Prostate gland (tissue), 2 donors: ENCODE measurements at regions of chr1 and their contacts with region 1.

Region 1: DNA sequence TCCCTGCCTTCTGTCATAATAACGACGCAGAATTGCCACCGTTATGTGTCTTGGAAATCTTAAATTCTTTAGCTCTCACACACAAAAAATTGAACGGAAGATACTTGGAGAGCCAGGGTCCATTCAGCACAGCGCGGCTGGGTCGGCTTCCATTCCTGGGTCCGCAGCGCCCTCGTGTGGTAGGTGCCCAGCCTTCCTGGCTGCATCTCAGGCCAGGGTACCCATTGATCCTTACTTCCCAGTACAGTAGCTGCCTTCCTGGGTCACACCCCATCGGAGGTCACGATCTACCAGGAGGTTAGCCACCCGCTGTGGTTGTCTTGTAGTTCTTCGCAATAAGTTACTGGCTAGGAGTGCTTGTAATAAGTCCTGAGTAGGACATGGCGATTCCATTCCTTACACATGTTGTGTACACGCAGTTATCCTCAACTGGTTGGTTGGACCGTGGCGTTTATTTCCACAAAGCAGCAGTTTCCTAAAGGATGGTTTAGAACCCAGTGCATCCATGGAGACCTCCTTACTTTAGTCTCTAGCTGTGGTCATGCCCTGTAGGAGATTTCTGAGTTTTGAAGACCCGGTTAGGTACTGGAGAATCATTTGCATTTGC is 9.9 kb upstream of the MTARC1 start:
- DNase-seq: peak; percentile 74
- H3K4me3 ChIP-seq: no peak overlapping the region
- H3K27ac ChIP-seq: no peak overlapping the region
- H3K4me1 ChIP-seq: no peaks in the 10 kb centered on the region
- H3K27me3 ChIP-seq: no peaks in the 10 kb centered on the region
- CTCF ChIP-seq: peak; percentile 58 to 87 (median 84)
- POLR2A ChIP-seq: no peak

Region 2: GRCh38 chr1:220272047-220272840 is 504.6 kb before region 1 on chr1 and contains the start of gene RAB3GAP2:
- intact Hi-C with region 1: loop called (anchors 10 kb)
- DNase-seq: peak; percentile 91
- H3K4me3 ChIP-seq: peak within 1 kb of the TSS; percentile 74 to 90
- H3K27ac ChIP-seq: peak within 1 kb of the TSS; percentile 68 to 89
- H3K4me1 ChIP-seq: peaks cover 6% of the 10 kb centered on the region
- H3K27me3 ChIP-seq: no peaks in the 10 kb centered on the region
- CTCF ChIP-seq: peak in 2 of 4 experiments; percentile 13 to 17
- POLR2A ChIP-seq: peak; percentile 54
- total RNA-seq, gene RAB3GAP2: 17.6 to 20.7 TPM

Region 3: DNA sequence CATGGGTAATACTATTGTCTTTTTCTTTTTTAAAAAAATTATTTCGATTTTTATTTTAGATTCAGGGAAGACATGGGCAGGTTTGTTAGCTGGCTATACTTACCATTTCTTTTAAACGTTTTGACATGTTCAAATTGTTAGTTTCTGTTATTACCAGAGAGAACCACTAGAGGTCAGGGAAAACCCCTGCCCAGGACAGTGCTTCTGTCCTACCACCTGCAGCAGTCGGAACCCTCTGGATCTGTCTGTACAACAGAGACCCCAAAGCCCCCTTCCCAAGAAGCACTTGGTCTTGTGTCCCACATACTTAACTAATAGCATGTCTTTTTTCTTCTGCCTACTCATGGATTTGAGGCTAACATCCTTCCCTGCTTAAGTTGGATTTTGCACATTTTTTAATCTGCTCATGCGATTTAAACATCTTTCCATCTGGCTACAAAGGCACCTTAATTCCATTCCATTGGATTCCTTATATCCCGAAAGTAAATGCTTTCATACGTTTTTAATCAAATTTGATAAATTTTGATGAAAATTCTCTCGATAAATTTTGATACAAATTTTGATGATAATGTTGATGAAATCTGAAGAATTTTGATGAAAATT is 96.6 kb before region 1 on chr1:
- intact Hi-C with region 1: loop called (anchors 1 kb)
- DNase-seq: peak; percentile 34
- H3K4me3 ChIP-seq: no peak overlapping the region
- H3K27ac ChIP-seq: no peak overlapping the region
- H3K4me1 ChIP-seq: no peaks in the 10 kb centered on the region
- H3K27me3 ChIP-seq: no peaks in the 10 kb centered on the region
- CTCF ChIP-seq: peak; percentile 49 to 70 (median 60)
- POLR2A ChIP-seq: no peak

Region 4: DNA sequence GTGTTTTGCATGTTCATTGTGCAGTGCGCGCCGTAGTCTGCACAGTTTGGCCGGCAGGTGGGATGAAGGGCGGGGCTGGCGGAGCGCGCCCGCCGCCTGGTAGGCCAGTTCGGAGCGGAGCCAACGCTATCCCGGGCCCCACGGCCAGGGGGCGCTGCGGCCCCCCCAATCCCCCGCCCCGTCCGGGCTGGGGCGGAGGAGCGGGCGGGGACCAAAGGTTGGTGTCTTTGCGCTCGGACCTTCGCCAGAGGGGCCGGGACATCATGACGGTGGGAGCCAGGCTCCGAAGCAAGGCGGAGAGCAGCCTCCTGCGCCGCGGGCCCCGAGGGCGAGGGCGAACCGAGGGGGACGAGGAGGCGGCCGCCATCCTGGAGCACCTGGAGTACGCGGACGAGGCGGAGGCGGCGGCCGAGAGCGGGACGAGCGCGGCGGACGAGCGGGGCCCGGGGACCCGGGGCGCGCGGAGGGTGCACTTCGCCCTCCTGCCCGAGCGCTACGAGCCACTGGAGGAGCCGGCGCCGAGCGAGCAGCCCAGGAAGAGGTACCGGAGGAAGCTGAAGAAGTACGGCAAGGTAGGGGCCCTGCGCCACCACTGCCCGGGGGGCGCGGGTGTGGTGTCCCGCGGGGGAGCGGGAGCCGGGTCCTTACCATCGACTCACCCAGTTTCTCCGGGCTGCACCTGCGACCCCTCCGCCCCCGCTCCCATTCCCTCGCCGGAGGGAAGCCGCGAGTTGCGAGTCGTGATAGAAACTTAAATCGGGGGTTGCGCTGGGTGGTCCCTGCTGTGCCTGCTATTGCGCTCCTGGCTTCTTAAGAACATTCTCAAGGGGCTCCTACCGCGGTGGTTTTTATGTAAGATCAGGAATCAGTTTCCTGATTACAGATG is 86.4 kb before region 1 on chr1 and contains the start of gene C1orf115:
- intact Hi-C with region 1: loop called (anchors 5 kb)
- DNase-seq: peak; percentile 75
- H3K4me3 ChIP-seq: peak within 1 kb of the TSS; percentile 77 to 90
- H3K27ac ChIP-seq: peak within 1 kb of the TSS; percentile 75 to 78
- H3K4me1 ChIP-seq: no peaks in the 10 kb centered on the region
- H3K27me3 ChIP-seq: no peaks in the 10 kb centered on the region
- CTCF ChIP-seq: peak; percentile 90 to 98 (median 94)
- POLR2A ChIP-seq: peak; percentile 51
- total RNA-seq, gene C1orf115: 26.9 to 79.4 TPM

Region 5: GRCh38 chr1:220711056-220711809 is 65.6 kb before region 1 on chr1:
- intact Hi-C with region 1: no loop called
- DNase-seq: no peak
- H3K4me3 ChIP-seq: no peak overlapping the region
- H3K27ac ChIP-seq: no peak overlapping the region
- H3K4me1 ChIP-seq: no peaks in the 10 kb centered on the region
- H3K27me3 ChIP-seq: no peaks in the 10 kb centered on the region
- CTCF ChIP-seq: no peak
- POLR2A ChIP-seq: no peak

Region 6: GRCh38 chr1:220966881-220967611 is 190.2 kb after region 1 on chr1:
- intact Hi-C with region 1: no loop called
- DNase-seq: no peak
- H3K4me3 ChIP-seq: no peak overlapping the region
- H3K27ac ChIP-seq: no peak overlapping the region
- H3K4me1 ChIP-seq: no peaks in the 10 kb centered on the region
- H3K27me3 ChIP-seq: no peaks in the 10 kb centered on the region
- CTCF ChIP-seq: no peak
- POLR2A ChIP-seq: no peak